WTC11 (cell line): ENCODE measurements at regions of chr22 and their contacts with region 1.

Region 1: GRCh38 chr22:41468381-41469217 is at the starts of genes ACO2 and PHF5A:
- DNase-seq: peak; percentile 98
- ATAC-seq: peak; percentile 94
- H3K4me3 Mint-ChIP-seq: peak within 1 kb of the TSS; percentile 96
- H3K27ac Mint-ChIP-seq: peak within 1 kb of the TSS; percentile 100
- H3K4me1 Mint-ChIP-seq: peaks cover 25% of the 10 kb centered on the region
- H3K27me3 Mint-ChIP-seq: no peaks in the 10 kb centered on the region; the same call in 1 of the 2 replicates
- CTCF ChIP-seq: no peak
- total RNA-seq, gene ACO2: 98.3 to 104 TPM (median 99.3 TPM) in 3 replicates
- total RNA-seq, gene PHF5A: 93.1 to 99.6 TPM (median 97.9 TPM) in 3 replicates

Region 2: GRCh38 chr22:41448189-41448808 is 20.3 kb before region 1 on chr22:
- CTCF ChIA-PET with region 1: interaction called, 13 read pairs
- POLR2A ChIA-PET with region 1: interaction called, 44 read pairs
- DNase-seq: peak; percentile 94
- ATAC-seq: peak; percentile 74
- H3K4me3 Mint-ChIP-seq: peak overlapping the region; percentile 96
- H3K27ac Mint-ChIP-seq: peak overlapping the region; percentile 99
- H3K4me1 Mint-ChIP-seq: peaks cover 13% of the 10 kb centered on the region
- H3K27me3 Mint-ChIP-seq: no peaks in the 10 kb centered on the region
- CTCF ChIP-seq: no peak

Region 3: DNA sequence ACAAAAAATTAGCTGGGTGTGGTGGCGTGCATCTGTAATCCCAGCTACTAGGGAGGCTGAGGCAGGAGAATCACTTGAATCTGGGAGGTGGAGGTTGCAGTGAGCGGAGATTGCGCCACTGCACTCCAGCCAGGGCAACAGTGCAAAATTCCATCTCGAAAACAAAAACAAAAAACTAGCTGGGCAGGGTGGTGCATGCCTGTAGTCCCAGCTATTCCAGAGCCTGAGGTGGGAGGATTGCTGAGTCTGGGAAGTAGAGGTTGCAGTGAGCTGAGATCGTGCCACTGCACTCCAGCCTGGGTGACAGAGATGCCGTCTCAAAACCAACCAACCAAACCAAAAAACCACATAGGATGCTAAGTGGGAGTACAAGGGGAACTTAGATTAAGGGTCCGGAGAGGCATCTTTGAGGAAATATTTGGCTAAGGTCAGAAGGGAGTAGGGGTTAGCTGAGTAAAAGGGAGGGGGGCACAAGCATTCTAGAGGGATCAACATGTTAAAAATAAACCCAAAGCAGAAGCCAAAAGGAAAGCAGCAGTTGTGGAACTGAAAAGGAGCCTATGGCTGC is 10.4 kb before region 1 on chr22:
- CTCF ChIA-PET with region 1: interaction called, 3 read pairs
- POLR2A ChIA-PET with region 1: interaction called, 13 read pairs
- DNase-seq: no peak
- ATAC-seq: no peak
- H3K4me3 Mint-ChIP-seq: no peak overlapping the region
- H3K27ac Mint-ChIP-seq: 0 out of 2 replicates have a peak overlapping the region, but pooled peaks have one; percentile 36
- H3K4me1 Mint-ChIP-seq: no peaks in the 10 kb centered on the region
- H3K27me3 Mint-ChIP-seq: no peaks in the 10 kb centered on the region
- CTCF ChIP-seq: no peak

Region 4: DNA sequence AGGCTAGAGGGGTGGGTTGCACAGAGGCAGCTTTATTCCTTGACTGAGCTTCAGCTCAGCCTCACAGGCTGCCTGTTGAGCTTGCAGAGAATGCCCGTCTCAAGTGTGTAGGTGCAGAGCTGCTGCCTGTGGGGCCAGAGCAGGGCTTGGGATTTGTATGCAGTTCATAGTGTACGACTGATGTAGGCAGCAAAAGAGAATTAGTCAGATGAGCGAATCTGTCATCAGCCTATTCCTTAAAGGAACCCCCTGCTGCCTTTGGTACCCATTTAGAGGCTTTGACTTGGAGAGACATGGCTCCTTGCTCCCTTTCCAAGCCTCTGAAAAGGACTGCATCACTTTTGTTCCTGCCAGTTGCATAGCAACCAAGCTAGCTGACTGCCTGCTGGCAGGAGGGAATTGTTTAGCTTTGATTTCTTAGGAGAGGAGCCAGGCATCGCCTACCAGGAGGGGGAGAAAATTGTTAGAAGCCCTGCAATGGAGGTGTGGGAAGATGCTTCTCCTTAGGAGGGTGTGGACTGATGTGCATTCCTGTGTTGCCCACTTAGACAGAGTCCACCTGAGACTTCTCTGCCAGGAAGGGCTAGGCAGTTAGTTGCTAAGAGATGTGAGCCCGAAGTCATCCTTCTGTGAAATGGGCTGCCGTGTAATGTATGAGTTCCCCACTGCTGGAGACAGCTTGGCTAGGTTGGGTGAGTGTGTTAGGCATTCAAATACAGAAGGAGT is 11.2 kb after region 1 on chr22:
- CTCF ChIA-PET with region 1: interaction called, 8 read pairs
- POLR2A ChIA-PET with region 1: interaction called, 12 read pairs
- DNase-seq: peak; percentile 15
- ATAC-seq: peak; percentile 48
- H3K4me3 Mint-ChIP-seq: no peak overlapping the region
- H3K27ac Mint-ChIP-seq: peak overlapping the region; percentile 14
- H3K4me1 Mint-ChIP-seq: peaks cover 40% of the 10 kb centered on the region
- H3K27me3 Mint-ChIP-seq: no peaks in the 10 kb centered on the region
- CTCF ChIP-seq: no peak